ENCODE measurements at regions of chr13 and their contacts with region 1.

Region 1: DNA sequence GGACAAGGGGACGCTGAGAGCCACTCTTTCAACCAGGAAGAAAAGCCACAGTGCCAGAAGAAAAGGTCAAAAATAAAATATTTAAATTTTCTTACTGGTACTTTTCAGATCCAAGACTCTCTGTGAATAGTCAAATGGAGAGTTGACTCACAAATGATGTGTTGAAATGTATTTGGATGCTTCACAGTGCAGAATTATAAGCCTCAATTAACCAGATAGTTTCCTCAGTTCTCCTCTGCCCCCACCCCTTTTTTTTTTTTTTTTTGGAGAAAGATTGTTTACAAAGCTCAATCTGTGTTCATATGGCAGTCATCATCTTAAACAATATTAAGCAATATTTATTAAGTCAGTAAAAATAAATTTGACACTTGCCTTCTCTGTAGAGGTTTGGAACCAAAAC is 470.8 kb downstream of the FGF9 start:
- DNase-seq: no peak
- ATAC-seq: no peak
- H3K4me3 ChIP-seq: no peak overlapping the region
- H3K4me3 Mint-ChIP-seq: no peak overlapping the region
- H3K27ac ChIP-seq: no peak overlapping the region
- H3K27ac Mint-ChIP-seq: no peak overlapping the region
- H3K4me1 ChIP-seq: peaks cover 7 to 10% of the 10 kb centered on the region in 2 donors
- H3K4me1 Mint-ChIP-seq: peaks cover 11% of the 10 kb centered on the region
- H3K27me3 ChIP-seq: peaks cover 0 to 3% (median 0%) of the 10 kb centered on the region in 4 experiments
- H3K27me3 Mint-ChIP-seq: no peaks in the 10 kb centered on the region
- CTCF ChIP-seq: no peak

Region 2: GRCh38 chr13:21701460-21701859 is 440.3 kb before region 1 on chr13:
- CTCF ChIA-PET with region 1: no interaction called
- POLR2A ChIA-PET with region 1: interaction called, 10 read pairs
- intact Hi-C with region 1: no loop called
- DNase-seq: no peak
- ATAC-seq: no peak
- H3K4me3 ChIP-seq: no peak overlapping the region
- H3K4me3 Mint-ChIP-seq: no peak overlapping the region
- H3K27ac ChIP-seq: no peak overlapping the region
- H3K27ac Mint-ChIP-seq: no peak overlapping the region
- H3K4me1 ChIP-seq: no peaks in the 10 kb centered on the region
- H3K4me1 Mint-ChIP-seq: no peaks in the 10 kb centered on the region
- H3K27me3 ChIP-seq: peaks cover 0 to 3% (median 0%) of the 10 kb centered on the region in 4 experiments
- H3K27me3 Mint-ChIP-seq: peaks cover 18% of the 10 kb centered on the region
- CTCF ChIP-seq: no peak

Measured in B cell (primary cell).